Cardiac septum (tissue), 1 donor: ENCODE measurements at regions of chr13 and their contacts with region 1.

Region 1: GRCh38 chr13:52617070-52618060 is 24.9 kb upstream of the HNRNPA1L2 start:
- DNase-seq: peak; percentile 88

Region 2: GRCh38 chr13:52652196-52652979 is 35.0 kb after region 1 on chr13 and contains the start of gene SUGT1:
- intact Hi-C with region 1: loop called (anchors 2 kb)
- DNase-seq: peak; percentile 98
- total RNA-seq, gene SUGT1: 49.1 TPM

Region 3: GRCh38 chr13:52743988-52744387 is 126.6 kb after region 1 on chr13:
- intact Hi-C with region 1: no loop called
- DNase-seq: no peak